ENCODE measurements at regions of chr7 and their contacts with region 1.

Region 1: DNA sequence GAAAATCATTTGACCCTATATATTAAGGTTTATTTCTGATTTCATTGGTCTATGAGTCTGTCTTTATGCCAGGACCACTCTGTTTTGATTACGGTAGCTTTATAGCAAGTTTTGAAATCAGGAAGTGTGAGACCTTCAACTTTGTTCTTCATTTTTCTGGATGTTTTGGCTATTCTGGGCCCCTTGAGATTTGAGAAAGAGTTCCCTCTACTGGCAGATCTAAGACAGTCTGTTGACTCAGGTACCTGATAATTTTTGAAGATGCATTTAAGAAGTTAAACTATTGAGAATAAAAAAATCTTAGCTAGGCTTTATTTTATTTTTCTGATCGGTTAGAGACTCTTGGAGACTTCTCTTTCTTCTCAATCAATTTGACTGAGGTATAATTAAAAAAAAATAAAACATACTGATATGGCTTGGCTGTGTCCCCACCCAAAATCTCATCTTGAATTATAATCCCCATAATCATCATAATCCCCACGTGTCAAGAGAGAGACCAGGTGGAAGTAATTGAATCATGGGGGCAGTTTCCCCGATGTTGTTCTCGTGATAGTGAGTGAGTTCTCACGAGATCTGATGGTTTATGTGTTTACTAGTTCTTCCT is 209.2 kb downstream of the SNX10 start:
- DNase-seq: no peak
- ATAC-seq: peak; percentile 82
- H3K4me3 ChIP-seq: no peak overlapping the region
- H3K27ac ChIP-seq: no peak overlapping the region
- H3K4me1 ChIP-seq: no peaks in the 10 kb centered on the region
- H3K27me3 ChIP-seq: no peaks in the 10 kb centered on the region; a peak in 1 of 4 replicates
- CTCF ChIP-seq: peak; percentile 57 to 60 (median 57)
- EP300 ChIP-seq: no peak
- POLR2A ChIP-seq: no peak
- RAD21 ChIP-seq: peak; percentile 83

Region 2: GRCh38 chr7:26078437-26079336 is 422.2 kb before region 1 on chr7:
- CTCF ChIA-PET with region 1: no interaction called
- POLR2A ChIA-PET with region 1: no interaction called
- RAD21 ChIA-PET with region 1: no interaction called
- SMC1A ChIA-PET with region 1: no interaction called
- in situ Hi-C with region 1: loop called (anchors 5 kb)
- intact Hi-C with region 1: no loop called
- DNase-seq: peak; percentile 36
- ATAC-seq: peak; percentile 98
- H3K4me3 ChIP-seq: no peak overlapping the region
- H3K27ac ChIP-seq: no peak overlapping the region
- H3K4me1 ChIP-seq: no peaks in the 10 kb centered on the region
- H3K27me3 ChIP-seq: peaks cover 2 to 5% of the 10 kb centered on the region in 2 experiments; a peak in 1 of 4 replicates
- CTCF ChIP-seq: peak; percentile 50 to 61 (median 53); a peak in 5 of 6 replicates
- EP300 ChIP-seq: no peak
- POLR2A ChIP-seq: no peak
- RAD21 ChIP-seq: peak; percentile 60

Region 3: DNA sequence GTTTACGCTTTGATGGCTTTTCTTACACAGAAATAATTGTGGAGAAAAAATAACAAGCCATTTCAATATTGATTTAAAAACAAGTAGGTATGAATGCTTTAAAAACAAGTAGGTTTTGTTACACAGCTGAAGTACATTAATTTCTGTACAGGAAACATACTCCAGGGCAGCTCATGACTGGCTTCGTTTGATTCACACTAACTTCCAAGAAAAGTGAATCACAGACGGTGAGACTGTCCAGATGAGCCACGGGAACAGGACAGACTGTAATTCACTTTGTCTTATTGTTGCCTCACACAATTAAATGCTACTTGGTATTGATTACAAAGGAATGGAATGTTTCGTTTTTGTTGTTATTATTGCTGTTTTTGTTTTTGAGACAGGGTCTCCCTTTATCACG is 235.8 kb before region 1 on chr7:
- CTCF ChIA-PET with region 1: no interaction called
- POLR2A ChIA-PET with region 1: no interaction called
- RAD21 ChIA-PET with region 1: no interaction called
- SMC1A ChIA-PET with region 1: no interaction called
- in situ Hi-C with region 1: loop called (anchors 25 kb)
- intact Hi-C with region 1: no loop called
- DNase-seq: no peak
- ATAC-seq: no peak
- H3K4me3 ChIP-seq: no peak overlapping the region
- H3K27ac ChIP-seq: no peak overlapping the region
- H3K4me1 ChIP-seq: no peaks in the 10 kb centered on the region
- H3K27me3 ChIP-seq: no peaks in the 10 kb centered on the region
- CTCF ChIP-seq: no peak
- EP300 ChIP-seq: no peak
- POLR2A ChIP-seq: no peak
- RAD21 ChIP-seq: no peak

Region 4: DNA sequence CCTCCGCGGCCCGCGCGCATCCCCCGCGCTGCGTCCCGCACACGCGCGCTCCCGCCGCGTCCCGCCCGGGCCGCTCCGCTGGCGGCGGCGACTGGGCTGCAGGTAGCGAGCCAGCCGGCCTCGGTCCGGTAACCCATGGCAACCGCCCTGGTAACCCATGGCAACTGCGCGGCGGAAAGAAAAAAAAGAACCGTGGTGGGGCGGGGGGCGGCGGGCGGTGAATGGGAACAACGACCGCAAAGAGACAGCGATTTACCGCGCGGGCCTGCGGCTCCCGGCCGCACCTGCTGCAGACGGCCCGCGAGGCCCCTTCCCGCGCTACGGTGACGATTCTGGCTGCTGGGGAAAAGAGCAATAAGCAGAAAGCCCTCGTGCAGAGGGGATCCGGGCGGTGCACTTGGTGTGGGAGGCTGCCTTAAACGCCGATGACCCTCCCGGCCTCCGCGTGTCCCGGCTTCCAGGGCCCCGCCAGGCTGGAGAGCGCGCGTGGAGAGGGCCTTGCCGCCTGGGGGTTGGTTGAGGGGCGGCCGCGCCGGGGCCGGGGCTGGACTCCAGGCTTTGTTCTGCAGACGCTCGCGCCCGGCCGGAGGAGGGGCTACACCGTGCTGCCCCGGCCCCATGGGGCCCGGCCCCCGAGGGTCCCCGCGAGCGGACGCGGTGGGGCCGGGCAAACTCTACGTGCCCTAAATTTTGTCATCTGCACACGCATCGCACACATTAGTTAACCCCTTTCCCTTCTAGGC is 124.5 kb before region 1 on chr7:
- CTCF ChIA-PET with region 1: interaction called, 16 read pairs
- POLR2A ChIA-PET with region 1: no interaction called
- RAD21 ChIA-PET with region 1: interaction called, 10 read pairs
- SMC1A ChIA-PET with region 1: interaction called, 36 read pairs
- in situ Hi-C with region 1: no loop called
- intact Hi-C with region 1: loop called (anchors 1 kb)
- DNase-seq: no peak
- ATAC-seq: peak; percentile 71
- H3K4me3 ChIP-seq: peak overlapping the region; percentile 63
- H3K27ac ChIP-seq: no peak overlapping the region
- H3K4me1 ChIP-seq: peaks cover 7% of the 10 kb centered on the region
- H3K27me3 ChIP-seq: no peaks in the 10 kb centered on the region
- CTCF ChIP-seq: no peak
- EP300 ChIP-seq: no peak
- POLR2A ChIP-seq: no peak
- RAD21 ChIP-seq: no peak

Region 5: DNA sequence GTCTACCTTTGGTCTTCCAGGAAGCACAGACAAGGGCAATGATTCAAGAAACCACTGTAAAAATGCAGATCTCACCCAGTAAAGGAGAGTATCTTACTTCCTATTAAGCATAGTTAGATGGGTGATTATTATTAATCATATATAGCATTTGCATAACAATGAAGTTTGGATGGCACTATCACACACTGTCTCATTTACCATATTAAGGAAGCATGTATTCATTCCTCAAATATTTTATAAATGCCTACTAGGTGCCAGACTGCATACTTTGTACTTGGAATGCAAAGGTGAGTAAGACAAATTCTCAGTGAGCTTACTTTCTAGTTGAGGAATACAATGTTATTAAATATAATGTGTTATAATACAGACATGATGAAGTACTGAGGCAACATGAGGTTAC is 417.4 kb after region 1 on chr7:
- CTCF ChIA-PET with region 1: no interaction called
- POLR2A ChIA-PET with region 1: no interaction called
- RAD21 ChIA-PET with region 1: no interaction called
- SMC1A ChIA-PET with region 1: no interaction called
- in situ Hi-C with region 1: no loop called
- intact Hi-C with region 1: no loop called
- DNase-seq: no peak
- ATAC-seq: no peak
- H3K4me3 ChIP-seq: no peak overlapping the region
- H3K27ac ChIP-seq: no peak overlapping the region
- H3K4me1 ChIP-seq: no peaks in the 10 kb centered on the region
- H3K27me3 ChIP-seq: peaks cover 0 to 2% of the 10 kb centered on the region in 2 experiments; a peak in 1 of 4 replicates
- CTCF ChIP-seq: no peak
- EP300 ChIP-seq: no peak
- POLR2A ChIP-seq: no peak
- RAD21 ChIP-seq: no peak

Region 6: GRCh38 chr7:27793780-27794179 is 1292.9 kb after region 1 on chr7:
- CTCF ChIA-PET with region 1: no interaction called
- POLR2A ChIA-PET with region 1: no interaction called
- RAD21 ChIA-PET with region 1: no interaction called
- SMC1A ChIA-PET with region 1: no interaction called
- in situ Hi-C with region 1: no loop called
- intact Hi-C with region 1: no loop called
- DNase-seq: no peak
- ATAC-seq: no peak
- H3K4me3 ChIP-seq: no peak overlapping the region
- H3K27ac ChIP-seq: no peak overlapping the region
- H3K4me1 ChIP-seq: no peaks in the 10 kb centered on the region
- H3K27me3 ChIP-seq: no peaks in the 10 kb centered on the region
- CTCF ChIP-seq: no peak
- EP300 ChIP-seq: no peak
- POLR2A ChIP-seq: no peak
- RAD21 ChIP-seq: no peak